Ascending aorta (tissue), 2 donors: ENCODE measurements at regions of chr12 and their contacts with region 1.

Region 1: DNA sequence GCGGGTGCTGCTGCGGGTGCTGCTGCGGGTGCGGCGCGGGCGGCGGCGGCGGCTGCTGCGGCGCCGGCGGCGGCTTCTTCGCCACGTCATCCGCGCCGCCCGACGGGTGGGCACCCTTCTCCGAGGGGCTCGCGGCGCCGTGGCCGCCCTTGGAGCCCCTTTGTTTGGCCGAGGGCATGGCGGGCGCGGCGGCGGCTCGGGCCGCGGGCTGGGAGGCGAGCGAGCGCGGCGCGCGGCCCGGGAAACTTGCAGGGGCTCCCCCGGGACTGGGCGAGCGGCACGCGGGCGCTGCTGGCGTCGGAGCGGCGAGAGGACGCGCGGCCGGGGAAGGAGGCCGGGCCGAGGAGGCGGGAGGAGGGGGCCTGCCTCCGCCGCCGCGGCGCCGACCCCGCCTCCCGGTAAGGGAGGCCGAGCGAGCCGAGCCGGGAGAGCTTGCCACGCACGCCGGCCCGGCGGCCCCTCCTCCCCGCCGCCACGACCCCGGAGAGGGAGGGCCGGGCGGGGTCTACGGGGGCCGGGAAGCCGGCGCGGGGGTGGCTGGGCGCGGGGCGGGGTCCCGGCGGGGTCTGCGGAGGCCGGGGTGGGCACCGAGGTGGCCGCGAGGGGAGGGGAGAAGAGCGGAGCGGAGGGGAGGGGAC is at the start of gene CKAP4:
- DNase-seq: peak in 1 of 2 donors; percentile 87
- H3K4me3 ChIP-seq: peak within 1 kb of the TSS; percentile 90 to 95
- H3K27ac ChIP-seq: peak within 1 kb of the TSS; percentile 97 to 99
- H3K4me1 ChIP-seq: peaks cover 3 to 24% of the 10 kb centered on the region in 2 donors
- H3K27me3 ChIP-seq: no peaks in the 10 kb centered on the region
- CTCF ChIP-seq: peak in 1 of 3 experiments; percentile 20
- total RNA-seq, gene CKAP4: 116 TPM

Region 2: DNA sequence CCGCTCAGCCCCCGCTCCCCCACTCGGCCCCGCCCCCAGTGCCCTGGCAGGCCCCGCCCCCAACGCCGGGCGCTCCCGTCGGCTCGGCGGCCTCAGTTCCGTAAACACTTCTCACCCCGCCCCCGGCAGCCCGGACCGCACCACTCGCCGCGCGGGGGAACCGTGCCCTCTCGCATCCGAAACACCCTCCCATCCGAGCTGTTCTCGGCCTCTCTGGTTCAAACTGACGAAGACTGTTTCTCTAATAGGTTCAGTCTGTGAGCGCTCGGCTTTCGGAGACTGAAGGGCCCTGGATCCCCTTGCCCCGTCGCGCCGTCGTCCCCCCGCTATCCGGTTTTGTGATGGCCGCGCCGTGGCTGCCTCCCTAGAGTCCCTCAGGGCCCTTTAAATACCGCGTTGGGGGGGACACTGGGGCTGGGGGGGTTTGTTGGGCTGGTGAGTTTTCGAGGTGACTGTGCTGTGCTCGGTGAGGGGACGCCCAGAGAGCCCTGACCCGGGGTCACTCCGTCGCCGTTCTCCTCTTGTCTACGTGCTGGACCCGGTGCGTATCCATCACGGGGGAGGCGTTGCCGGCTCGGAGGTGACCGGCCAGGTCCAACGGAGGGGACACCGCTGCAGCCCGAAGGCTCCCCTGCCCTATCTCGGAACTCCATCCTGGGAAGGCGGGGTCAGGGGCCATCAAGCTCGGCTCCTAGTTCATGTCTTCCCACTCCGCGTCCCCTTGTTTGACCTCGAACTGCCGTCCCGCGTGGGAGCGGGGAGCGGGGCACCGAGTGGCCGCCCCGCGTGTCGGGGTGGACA is 54.8 kb after region 1 on chr12 and contains the start of gene TCP11L2:
- intact Hi-C with region 1: loop called (anchors 1 kb)
- DNase-seq: peak; percentile 46 to 92
- H3K4me3 ChIP-seq: peak within 1 kb of the TSS; percentile 86 to 90
- H3K27ac ChIP-seq: peak within 1 kb of the TSS; percentile 88 to 91
- H3K4me1 ChIP-seq: peaks cover 0 to 12% of the 10 kb centered on the region in 2 donors
- H3K27me3 ChIP-seq: no peaks in the 10 kb centered on the region
- CTCF ChIP-seq: no peak
- total RNA-seq, gene TCP11L2: 16.0 TPM